ENCODE measurements at regions of chr19 and their contacts with region 1.

Region 1: DNA sequence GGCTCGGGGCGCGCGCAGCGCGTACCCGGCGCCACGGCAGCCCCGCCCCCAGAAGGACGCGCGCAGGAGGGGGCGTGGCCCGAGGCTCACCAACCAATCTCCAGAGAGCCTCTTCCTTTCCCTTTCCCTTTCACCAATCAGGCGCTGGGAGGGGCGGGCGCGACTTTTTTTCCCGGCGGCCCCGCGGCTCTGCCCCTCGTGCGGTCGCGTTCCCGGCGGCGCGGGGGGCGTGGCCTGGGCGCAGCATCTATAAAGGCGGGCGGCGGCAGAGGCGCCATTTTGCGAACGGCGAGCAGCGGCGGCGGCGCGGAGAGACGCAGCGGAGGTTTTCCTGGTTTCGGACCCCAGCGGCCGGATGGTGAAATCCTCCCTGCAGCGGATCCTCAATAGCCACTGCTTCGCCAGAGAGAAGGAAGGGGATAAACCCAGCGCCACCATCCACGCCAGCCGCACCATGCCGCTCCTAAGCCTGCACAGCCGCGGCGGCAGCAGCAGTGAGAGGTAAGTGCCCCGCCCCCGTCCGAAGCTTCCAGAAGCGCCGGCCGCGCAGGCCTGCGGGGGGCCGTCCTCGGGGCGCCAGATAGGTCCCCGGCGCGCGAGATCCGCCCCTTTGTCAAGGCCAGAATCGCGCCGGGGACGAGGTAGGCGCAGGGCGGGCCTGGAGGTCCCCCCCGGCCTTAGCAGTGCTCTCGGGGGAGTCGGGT is 12.6 kb downstream of the PEAK3 start:
- DNase-seq: peak; percentile 98 to 100 (median 99)
- ATAC-seq: peak; percentile 90
- H3K4me3 ChIP-seq: peak overlapping the region; percentile 96
- H3K4me3 Mint-ChIP-seq: peak overlapping the region; percentile 86 to 96 (median 90)
- H3K27ac ChIP-seq: peak overlapping the region; percentile 87
- H3K27ac Mint-ChIP-seq: peak overlapping the region; percentile 72 to 94 (median 89)
- H3K4me1 ChIP-seq: peaks cover 32 to 34% of the 10 kb centered on the region in 2 donors
- H3K4me1 Mint-ChIP-seq: peaks cover 28 to 52% (median 35%) of the 10 kb centered on the region in 7 donors
- H3K27me3 ChIP-seq: no peaks in the 10 kb centered on the region
- H3K27me3 Mint-ChIP-seq: no peaks in the 10 kb centered on the region

Region 2: DNA sequence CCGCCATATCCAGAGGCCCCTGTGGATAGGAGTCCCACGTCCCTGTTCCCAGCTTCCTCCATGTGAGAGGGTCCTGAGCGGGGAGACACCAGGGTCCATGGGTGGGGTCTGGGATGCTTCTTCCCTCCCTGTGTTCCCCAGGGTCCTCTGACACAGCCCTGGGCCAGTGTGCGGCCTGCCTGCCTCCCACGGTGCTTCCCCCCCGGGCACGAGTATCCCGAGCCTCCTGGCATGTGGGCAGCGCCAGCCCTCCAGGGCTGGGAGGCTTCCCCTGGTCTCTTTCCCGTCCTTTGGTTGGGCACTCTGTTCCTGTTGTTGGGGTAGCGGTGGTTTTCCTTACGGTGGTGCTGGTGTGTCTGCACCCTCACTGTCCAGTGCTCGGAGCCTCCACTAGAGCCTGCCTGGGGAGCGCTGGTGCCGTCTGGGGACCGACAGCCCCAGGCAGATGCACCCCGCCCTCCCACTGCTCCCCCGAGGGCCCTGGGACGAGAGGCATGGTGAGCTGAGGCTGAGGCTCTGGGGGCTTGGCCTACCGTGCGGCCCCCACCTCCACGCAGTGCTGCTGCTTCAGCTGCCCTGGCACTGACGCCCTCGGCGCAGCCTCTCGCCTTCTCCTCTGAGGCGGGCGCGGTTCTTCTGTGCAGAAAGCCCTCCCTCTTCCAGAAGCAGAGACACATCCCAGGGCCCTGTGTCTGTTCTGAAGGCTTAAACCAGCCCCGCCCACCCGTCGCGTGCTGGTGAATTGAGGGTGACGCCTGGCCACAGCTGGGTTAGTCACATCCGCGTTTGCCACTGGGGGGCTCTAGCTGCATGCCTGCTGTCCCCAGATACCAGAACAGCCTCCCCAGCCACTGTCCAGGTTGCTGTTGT is 61.2 kb before region 1 on chr19:
- CTCF ChIA-PET with region 1: no interaction called
- POLR2A ChIA-PET with region 1: no interaction called
- intact Hi-C with region 1: no loop called
- DNase-seq: no peak
- ATAC-seq: peak; percentile 26
- H3K4me3 ChIP-seq: no peak overlapping the region
- H3K4me3 Mint-ChIP-seq: no peak overlapping the region
- H3K27ac ChIP-seq: no peak overlapping the region
- H3K27ac Mint-ChIP-seq: no peak overlapping the region
- H3K4me1 ChIP-seq: no peaks in the 10 kb centered on the region
- H3K4me1 Mint-ChIP-seq: peaks cover 0 to 5% (median under 1%) of the 10 kb centered on the region in 7 donors
- H3K27me3 ChIP-seq: no peaks in the 10 kb centered on the region
- H3K27me3 Mint-ChIP-seq: no peaks in the 10 kb centered on the region

Region 3: DNA sequence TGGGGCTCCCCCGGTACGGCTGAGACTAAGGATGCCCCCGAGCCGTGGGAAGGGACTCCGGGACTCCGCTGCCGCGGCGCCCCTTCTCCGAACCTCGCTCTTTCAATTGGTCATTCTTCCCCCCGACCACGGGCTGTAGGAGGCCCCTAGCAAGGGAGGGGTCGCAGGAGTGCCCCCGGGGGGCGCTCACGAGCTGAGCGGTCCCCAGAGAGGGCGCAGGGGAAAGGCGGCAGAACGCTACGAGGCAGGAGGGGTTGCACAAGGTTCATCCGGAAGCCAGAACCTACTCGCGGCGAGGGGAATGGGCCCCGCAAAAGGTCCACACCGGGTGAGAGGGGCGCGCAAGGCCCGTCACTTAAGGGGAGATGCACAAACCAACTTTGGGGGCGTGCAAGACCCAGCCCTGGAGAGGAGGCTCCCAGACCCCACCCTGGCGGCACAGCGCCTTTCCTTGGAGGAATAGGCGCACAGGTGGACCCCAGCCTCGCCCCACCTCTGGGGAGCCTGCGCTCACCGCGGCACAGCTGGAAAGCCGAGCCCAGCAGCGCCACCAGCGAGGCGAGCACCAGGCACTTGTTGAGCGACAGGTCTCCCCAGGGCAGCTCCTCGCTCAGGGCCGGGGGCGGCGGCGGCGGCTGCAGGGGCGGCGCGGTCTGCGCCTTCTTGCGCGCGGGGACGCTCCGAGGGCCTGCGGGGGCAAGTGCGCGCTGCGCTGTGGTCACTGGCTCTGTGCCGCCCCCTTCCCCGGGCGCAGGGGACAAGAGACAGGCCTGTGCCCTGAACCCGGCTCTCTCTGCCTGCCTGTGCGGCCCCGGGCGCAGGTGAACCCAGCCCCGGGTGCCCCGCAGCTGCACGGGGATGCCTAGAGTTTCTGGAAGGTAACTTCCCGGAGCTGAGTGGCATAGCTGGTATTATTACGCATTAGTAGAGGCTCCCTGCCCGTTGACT is 16.0 kb before region 1 on chr19:
- CTCF ChIA-PET with region 1: interaction called, 14 read pairs
- POLR2A ChIA-PET with region 1: interaction called, 71 read pairs
- intact Hi-C with region 1: loop called (anchors 1 kb)
- DNase-seq: peak in 8 of 9 donors; percentile 37 to 71 (median 58)
- ATAC-seq: no peak
- H3K4me3 ChIP-seq: peak overlapping the region; percentile 63
- H3K4me3 Mint-ChIP-seq: peak overlapping the region; percentile 50 to 85 (median 78)
- H3K27ac ChIP-seq: no peak overlapping the region
- H3K27ac Mint-ChIP-seq: peak overlapping the region in 2 of 9 donors; percentile 52 to 64
- H3K4me1 ChIP-seq: peaks cover 17 to 41% of the 10 kb centered on the region in 2 donors
- H3K4me1 Mint-ChIP-seq: peaks cover 0 to 18% (median 15%) of the 10 kb centered on the region in 7 donors
- H3K27me3 ChIP-seq: no peaks in the 10 kb centered on the region
- H3K27me3 Mint-ChIP-seq: peaks cover 0 to 25% (median 0%) of the 10 kb centered on the region in 5 donors

Region 4: GRCh38 chr19:2289714-2290435 is 20.5 kb after region 1 on chr19:
- CTCF ChIA-PET with region 1: interaction called, 15 read pairs
- POLR2A ChIA-PET with region 1: interaction called, 18 read pairs
- intact Hi-C with region 1: loop called in 1 of 2 experiments (anchors 2 kb)
- DNase-seq: peak; percentile 54 to 77 (median 66)
- ATAC-seq: peak; percentile 77
- H3K4me3 ChIP-seq: peak overlapping the region; percentile 74
- H3K4me3 Mint-ChIP-seq: peak overlapping the region; percentile 87 to 96 (median 91)
- H3K27ac ChIP-seq: peak overlapping the region; percentile 59
- H3K27ac Mint-ChIP-seq: peak overlapping the region; percentile 88 to 98 (median 92)
- H3K4me1 ChIP-seq: peaks cover 15 to 19% of the 10 kb centered on the region in 2 donors
- H3K4me1 Mint-ChIP-seq: peaks cover 22 to 42% (median 31%) of the 10 kb centered on the region in 7 donors
- H3K27me3 ChIP-seq: no peaks in the 10 kb centered on the region
- H3K27me3 Mint-ChIP-seq: no peaks in the 10 kb centered on the region

Region 5: DNA sequence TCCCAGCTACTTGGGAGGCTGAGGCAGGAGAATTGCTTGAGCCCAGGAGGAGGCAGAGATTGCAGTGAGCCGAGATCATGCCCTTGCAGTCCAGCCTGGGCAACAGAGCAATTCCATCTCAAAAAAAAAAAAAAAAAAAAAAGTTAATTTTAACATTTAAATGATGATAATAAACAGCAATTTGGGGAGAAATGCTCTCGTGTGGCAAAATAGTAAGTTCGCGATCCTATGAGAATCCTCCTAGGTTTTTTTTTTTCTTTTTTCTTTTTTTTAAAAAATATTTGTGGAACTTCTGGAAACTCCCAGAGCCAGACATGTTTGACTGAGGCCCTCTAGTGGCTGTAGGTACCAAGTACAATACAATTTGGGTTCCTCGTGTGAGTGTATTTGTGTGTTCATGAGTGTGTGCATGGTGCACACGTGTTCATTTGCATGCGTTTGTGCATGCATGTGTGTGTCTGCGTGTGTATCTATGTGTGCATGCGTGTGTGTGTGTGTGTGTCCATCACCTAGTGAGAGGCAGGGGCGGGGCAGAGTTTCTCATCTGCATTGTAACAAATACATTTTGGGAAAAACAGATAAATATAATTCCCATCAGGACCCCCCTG is 121.8 kb after region 1 on chr19:
- CTCF ChIA-PET with region 1: interaction called, 27 read pairs
- POLR2A ChIA-PET with region 1: interaction called, 12 read pairs
- intact Hi-C with region 1: no loop called
- DNase-seq: peak in 7 of 9 donors; percentile 26 to 59 (median 46)
- ATAC-seq: peak; percentile 88
- H3K4me3 ChIP-seq: no peak overlapping the region
- H3K4me3 Mint-ChIP-seq: no peak overlapping the region
- H3K27ac ChIP-seq: no peak overlapping the region
- H3K27ac Mint-ChIP-seq: peak overlapping the region in 2 of 9 donors; percentile 1 to 91
- H3K4me1 ChIP-seq: no peaks in the 10 kb centered on the region
- H3K4me1 Mint-ChIP-seq: peaks cover 4 to 16% (median 5%) of the 10 kb centered on the region in 7 donors
- H3K27me3 ChIP-seq: no peaks in the 10 kb centered on the region
- H3K27me3 Mint-ChIP-seq: peaks cover 0 to 13% (median 0%) of the 10 kb centered on the region in 5 donors

Region 6: GRCh38 chr19:4123615-4124568 is 1854.5 kb after region 1 on chr19 and contains the start of gene MAP2K2:
- CTCF ChIA-PET with region 1: no interaction called
- POLR2A ChIA-PET with region 1: no interaction called
- intact Hi-C with region 1: no loop called
- DNase-seq: peak; percentile 91 to 99 (median 96)
- ATAC-seq: peak; percentile 96
- H3K4me3 ChIP-seq: peak within 1 kb of the TSS; percentile 77
- H3K4me3 Mint-ChIP-seq: peak within 1 kb of the TSS; percentile 89 to 100 (median 94)
- H3K27ac ChIP-seq: peak within 1 kb of the TSS; percentile 80
- H3K27ac Mint-ChIP-seq: peak within 1 kb of the TSS; percentile 89 to 97 (median 93)
- H3K4me1 ChIP-seq: peaks cover 10 to 11% of the 10 kb centered on the region in 2 donors
- H3K4me1 Mint-ChIP-seq: peaks cover 17 to 31% (median 25%) of the 10 kb centered on the region in 7 donors
- H3K27me3 ChIP-seq: no peaks in the 10 kb centered on the region
- H3K27me3 Mint-ChIP-seq: no peaks in the 10 kb centered on the region
- total RNA-seq, gene MAP2K2: 87.4 to 162 (median 123) TPM

Measured in naive thymus-derived CD4-positive, alpha-beta T cell (primary cell).